SK-N-SH (cell line): ENCODE measurements at regions of chr18 and their contacts with region 1.

Region 1: DNA sequence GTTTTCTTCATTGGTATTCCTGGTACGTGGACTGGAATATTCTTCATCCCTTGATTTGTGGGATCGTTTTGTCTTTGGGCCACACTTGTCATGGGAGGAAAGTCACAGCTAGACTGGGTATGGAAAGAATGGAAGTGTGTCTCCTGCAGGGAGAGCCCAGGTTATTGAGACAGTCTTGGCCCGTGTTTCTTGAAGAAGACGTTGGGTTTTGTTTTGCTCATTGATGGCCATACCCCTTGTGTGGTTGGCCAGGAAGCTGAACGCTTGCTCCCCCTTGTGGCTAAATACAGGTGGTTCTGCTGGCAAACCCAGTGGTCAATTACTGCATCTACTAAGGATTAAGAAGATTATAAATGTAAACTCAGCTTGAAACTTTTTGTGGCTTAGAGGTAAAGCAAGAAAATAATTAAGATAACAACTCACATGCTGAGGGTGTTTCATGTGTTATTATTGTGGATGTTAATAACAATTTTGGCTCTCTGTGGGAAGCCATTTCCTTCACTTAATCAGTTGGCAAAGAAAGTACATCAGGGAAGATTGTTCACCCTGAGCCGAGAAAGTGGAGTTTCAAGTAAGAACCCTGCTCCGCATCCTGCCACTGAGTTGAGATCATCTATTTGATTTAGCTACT is 91.8 kb downstream of the NEDD4L start:
- DNase-seq: peak; percentile 76
- H3K4me3 ChIP-seq: peak overlapping the region in 1 of 2 experiments; percentile 5; a peak in 1 of 4 replicates
- H3K27ac ChIP-seq: no peak overlapping the region
- H3K4me1 ChIP-seq: no peaks in the 10 kb centered on the region; a peak in 1 of 4 replicates
- H3K27me3 ChIP-seq: no peaks in the 10 kb centered on the region
- CTCF ChIP-seq: peak; percentile 89
- EP300 ChIP-seq: no peak
- RAD21 ChIP-seq: peak; percentile 73

Region 2: GRCh38 chr18:57881818-57882413 is 253.9 kb before region 1 on chr18:
- CTCF ChIA-PET with region 1: interaction called, 17 read pairs
- POLR2A ChIA-PET with region 1: no interaction called
- DNase-seq: peak; percentile 57
- H3K4me3 ChIP-seq: peak overlapping the region in 1 of 2 experiments; percentile 33; a peak in 1 of 4 replicates
- H3K27ac ChIP-seq: no peak overlapping the region
- H3K4me1 ChIP-seq: no peaks in the 10 kb centered on the region; a peak in 1 of 4 replicates
- H3K27me3 ChIP-seq: no peaks in the 10 kb centered on the region
- CTCF ChIP-seq: peak; percentile 94
- EP300 ChIP-seq: no peak
- RAD21 ChIP-seq: peak; percentile 98

Region 3: GRCh38 chr18:57959278-57959677 is 176.5 kb before region 1 on chr18:
- CTCF ChIA-PET with region 1: interaction called, 11 read pairs
- POLR2A ChIA-PET with region 1: no interaction called
- DNase-seq: peak; percentile 49
- H3K4me3 ChIP-seq: peak overlapping the region in 1 of 2 experiments; percentile 35; a peak in 1 of 4 replicates
- H3K27ac ChIP-seq: no peak overlapping the region
- H3K4me1 ChIP-seq: peaks cover 0 to 7% of the 10 kb centered on the region in 2 experiments; a peak in 2 of 4 replicates
- H3K27me3 ChIP-seq: no peaks in the 10 kb centered on the region; the same call in 1 of the 2 replicates
- CTCF ChIP-seq: peak; percentile 52
- EP300 ChIP-seq: no peak
- RAD21 ChIP-seq: peak; percentile 56

Region 4: DNA sequence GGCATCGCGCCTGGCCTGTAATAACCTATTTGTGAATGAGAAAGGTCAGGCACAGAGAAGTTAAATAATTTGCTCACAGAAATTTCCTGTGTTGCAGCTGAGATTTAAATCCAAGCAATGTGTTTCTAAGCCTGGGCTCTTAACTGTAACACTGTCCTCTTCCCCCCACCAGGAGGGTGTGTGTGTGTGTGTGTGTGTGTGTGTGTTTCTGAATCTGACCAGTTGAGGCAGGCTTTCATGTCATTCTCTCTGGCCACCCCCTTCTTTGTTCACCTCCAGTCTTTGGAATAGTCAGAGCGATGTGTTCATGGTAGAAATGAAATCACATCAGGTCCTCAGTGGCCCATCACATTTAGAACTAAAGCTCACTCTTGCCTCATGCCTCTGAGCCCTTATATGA is 10.6 kb before region 1 on chr18:
- CTCF ChIA-PET with region 1: interaction called, 51 read pairs
- POLR2A ChIA-PET with region 1: no interaction called
- DNase-seq: no peak
- H3K4me3 ChIP-seq: no peak overlapping the region
- H3K27ac ChIP-seq: no peak overlapping the region
- H3K4me1 ChIP-seq: no peaks in the 10 kb centered on the region
- H3K27me3 ChIP-seq: no peaks in the 10 kb centered on the region
- CTCF ChIP-seq: no peak
- EP300 ChIP-seq: no peak
- RAD21 ChIP-seq: no peak

Region 5: GRCh38 chr18:58180738-58181353 is 45.0 kb after region 1 on chr18:
- CTCF ChIA-PET with region 1: interaction called, 16 read pairs
- POLR2A ChIA-PET with region 1: no interaction called
- DNase-seq: peak; percentile 65
- H3K4me3 ChIP-seq: no peak overlapping the region
- H3K27ac ChIP-seq: no peak overlapping the region
- H3K4me1 ChIP-seq: peaks cover 22 to 35% of the 10 kb centered on the region in 2 experiments
- H3K27me3 ChIP-seq: no peaks in the 10 kb centered on the region
- CTCF ChIP-seq: peak; percentile 96
- EP300 ChIP-seq: no peak
- RAD21 ChIP-seq: peak; percentile 79

Region 6: GRCh38 chr18:58392324-58393000 is 256.6 kb after region 1 on chr18:
- CTCF ChIA-PET with region 1: no interaction called
- POLR2A ChIA-PET with region 1: no interaction called
- DNase-seq: no peak
- H3K4me3 ChIP-seq: no peak overlapping the region
- H3K27ac ChIP-seq: peak overlapping the region in 1 of 2 experiments; percentile 65; a peak in 1 of 4 replicates
- H3K4me1 ChIP-seq: peaks cover 0 to 23% of the 10 kb centered on the region in 2 experiments; a peak in 1 of 4 replicates
- H3K27me3 ChIP-seq: no peaks in the 10 kb centered on the region
- CTCF ChIP-seq: no peak
- EP300 ChIP-seq: no peak
- RAD21 ChIP-seq: no peak

Region 7: DNA sequence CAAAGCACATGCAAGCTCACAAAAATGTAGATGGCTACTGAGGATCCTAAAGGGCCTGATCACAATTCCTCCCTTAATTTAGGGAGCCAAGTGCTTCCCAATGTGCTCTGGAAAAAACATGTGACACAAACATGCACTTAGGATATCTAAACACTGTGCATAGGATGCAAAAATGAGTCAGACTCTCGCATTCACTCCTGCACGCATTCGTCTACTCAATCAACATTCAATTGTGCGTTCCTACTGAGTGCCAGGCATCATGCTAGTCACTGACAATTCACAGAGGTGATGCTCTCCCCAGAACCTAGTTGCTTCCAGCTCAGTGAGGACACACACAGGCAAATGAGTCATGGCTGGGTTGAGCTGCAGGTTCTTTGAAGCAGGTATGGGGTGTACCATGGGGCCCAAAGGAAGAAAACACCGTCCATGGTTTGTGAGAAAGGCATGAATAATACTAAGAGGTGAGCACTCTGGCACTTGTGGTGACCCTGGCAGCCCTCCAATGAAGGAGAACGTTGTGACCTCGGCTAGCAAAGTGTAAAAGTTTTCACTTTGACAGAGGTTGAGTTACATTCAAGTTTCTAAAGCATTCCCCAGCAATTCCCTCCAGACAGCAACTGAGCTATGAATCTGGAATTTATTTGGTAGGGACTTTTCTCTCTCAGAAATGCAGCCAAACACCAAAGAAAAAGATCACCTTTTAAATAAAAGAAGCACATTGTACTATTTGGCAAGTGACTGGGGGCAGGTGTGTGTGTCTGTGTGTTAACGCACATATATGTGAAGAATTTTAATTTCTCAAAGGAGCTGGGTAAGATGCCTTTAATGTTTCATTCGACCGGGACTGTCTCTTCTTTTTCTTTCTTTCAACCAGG is 319.7 kb after region 1 on chr18:
- CTCF ChIA-PET with region 1: no interaction called
- POLR2A ChIA-PET with region 1: no interaction called
- DNase-seq: no peak
- H3K4me3 ChIP-seq: no peak overlapping the region
- H3K27ac ChIP-seq: no peak overlapping the region
- H3K4me1 ChIP-seq: no peaks in the 10 kb centered on the region
- H3K27me3 ChIP-seq: no peaks in the 10 kb centered on the region
- CTCF ChIP-seq: no peak
- EP300 ChIP-seq: no peak
- RAD21 ChIP-seq: no peak

Region 8: GRCh38 chr18:58493516-58494253 is 357.9 kb after region 1 on chr18:
- CTCF ChIA-PET with region 1: interaction called, 10 read pairs
- POLR2A ChIA-PET with region 1: no interaction called
- DNase-seq: peak; percentile 74
- H3K4me3 ChIP-seq: peak overlapping the region in 1 of 2 experiments; percentile 13; a peak in 1 of 4 replicates
- H3K27ac ChIP-seq: no peak overlapping the region
- H3K4me1 ChIP-seq: peaks cover 0 to 4% of the 10 kb centered on the region in 2 experiments; a peak in 1 of 4 replicates
- H3K27me3 ChIP-seq: no peaks in the 10 kb centered on the region
- CTCF ChIP-seq: peak; percentile 94
- EP300 ChIP-seq: no peak
- RAD21 ChIP-seq: peak; percentile 88